Testis (tissue), 5 donors: ENCODE measurements at regions of chr6 and their contacts with region 1.

Region 1: GRCh38 chr6:41424370-41425058 is 89.1 kb downstream of the NCR2 start:
- DNase-seq: peak; percentile 94
- H3K4me3 ChIP-seq: no peak overlapping the region
- H3K27ac ChIP-seq: no peak overlapping the region
- H3K4me1 ChIP-seq: peaks cover 17% of the 10 kb centered on the region
- H3K27me3 ChIP-seq: no peaks in the 10 kb centered on the region
- CTCF ChIP-seq: peak; percentile 73 to 87 (median 86)
- POLR2A ChIP-seq: no peak

Region 2: DNA sequence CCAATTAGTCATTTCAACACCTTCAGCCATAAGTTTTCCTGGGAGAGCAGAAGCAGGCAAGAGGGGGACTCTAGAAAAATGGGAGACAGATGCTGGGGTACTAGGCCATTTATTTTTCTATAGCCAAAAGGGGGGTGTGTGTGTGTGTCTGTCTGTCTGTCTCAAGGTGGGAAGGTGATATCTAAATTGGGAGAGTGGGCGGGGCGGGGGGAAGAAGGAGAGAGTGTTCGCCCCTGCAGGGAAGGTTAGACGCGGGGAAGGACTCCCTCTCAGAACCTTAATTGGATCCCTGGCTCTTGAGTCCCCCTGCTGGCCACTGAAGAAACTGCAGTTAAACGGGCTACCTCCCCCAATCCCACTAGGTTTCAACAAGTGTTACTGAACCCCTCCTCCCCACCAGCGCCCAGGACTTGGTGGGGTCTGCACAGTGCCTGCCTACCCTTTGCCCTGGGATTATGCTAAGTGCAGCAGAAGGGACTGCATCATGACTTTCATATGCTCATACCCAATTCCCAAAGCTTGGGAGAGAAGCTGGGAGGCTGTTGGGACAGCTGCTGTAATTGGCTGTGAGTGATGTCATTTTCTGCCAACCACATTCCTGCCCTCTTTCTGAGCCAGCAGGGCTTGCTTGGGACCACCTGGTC is 167.5 kb after region 1 on chr6:
- intact Hi-C with region 1: loop called (anchors 10 kb)
- DNase-seq: peak; percentile 86
- H3K4me3 ChIP-seq: no peak overlapping the region
- H3K27ac ChIP-seq: no peak overlapping the region
- H3K4me1 ChIP-seq: peaks cover 3% of the 10 kb centered on the region
- H3K27me3 ChIP-seq: no peaks in the 10 kb centered on the region
- CTCF ChIP-seq: peak; percentile 94 to 98 (median 94)
- POLR2A ChIP-seq: no peak